CD8-positive, alpha-beta memory T cell (primary cell): ENCODE measurements at regions of chr12 and their contacts with region 1.

Region 1: DNA sequence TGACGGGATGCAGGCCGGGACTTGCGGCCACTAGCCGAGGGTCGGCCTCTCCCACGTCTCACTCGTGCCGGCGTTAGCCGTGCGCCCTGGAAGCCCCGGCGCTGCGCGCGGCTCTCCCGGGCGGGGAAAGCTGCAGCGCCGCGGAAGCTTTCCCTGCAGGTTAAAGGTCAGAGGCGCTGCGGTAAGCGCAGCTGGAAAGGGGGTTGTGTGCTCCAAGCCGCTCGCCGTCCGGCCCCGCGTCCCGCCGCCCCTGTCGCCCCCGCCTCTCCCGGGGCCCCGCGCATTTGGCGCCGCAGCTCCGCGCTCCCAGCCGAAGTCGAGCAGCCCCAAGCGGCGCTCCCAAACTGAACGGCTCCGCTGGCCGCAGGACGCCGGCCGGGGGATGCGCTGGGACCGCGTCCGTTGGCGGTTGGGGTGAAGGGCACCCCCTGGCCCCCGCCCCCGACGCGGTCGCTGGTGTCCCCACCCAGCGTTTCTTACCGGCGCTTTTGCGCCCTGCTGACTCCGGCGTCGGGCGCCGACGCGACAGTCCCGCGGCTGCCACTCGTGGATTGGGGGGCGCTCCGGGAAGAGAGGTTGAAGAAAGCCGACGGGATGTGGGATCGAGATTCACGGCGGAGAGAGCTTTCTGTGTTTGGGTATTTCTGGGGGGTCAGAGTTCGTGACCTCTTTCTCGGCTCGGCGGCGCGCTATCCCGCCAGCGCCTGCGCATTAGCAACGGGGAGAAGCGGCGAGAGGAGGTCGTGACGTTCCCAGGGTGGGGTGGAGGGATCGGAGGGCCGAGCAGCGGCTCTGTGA is at the start of gene NR2C1:
- DNase-seq: peak; percentile 85 to 95 (median 92)
- H3K4me3 ChIP-seq: peak within 1 kb of the TSS; percentile 88
- H3K4me3 Mint-ChIP-seq: peak within 1 kb of the TSS; percentile 95 to 98 (median 96)
- H3K27ac ChIP-seq: peak within 1 kb of the TSS; percentile 81
- H3K27ac Mint-ChIP-seq: peak within 1 kb of the TSS; percentile 80 to 99 (median 94)
- H3K4me1 ChIP-seq: peaks cover 12% of the 10 kb centered on the region
- H3K4me1 Mint-ChIP-seq: peaks cover 23 to 37% (median 25%) of the 10 kb centered on the region in 3 donors
- H3K27me3 ChIP-seq: no peaks in the 10 kb centered on the region
- H3K27me3 Mint-ChIP-seq: no peaks in the 10 kb centered on the region
- total RNA-seq, gene NR2C1: 17.1 to 21.9 TPM

Region 2: GRCh38 chr12:95217377-95218149 is 144.5 kb after region 1 on chr12 and contains the starts of genes FGD6 and VEZT:
- CTCF ChIA-PET with region 1: interaction called, 10 read pairs
- POLR2A ChIA-PET with region 1: interaction called, 10 read pairs
- DNase-seq: peak; percentile 94 to 98 (median 98)
- H3K4me3 ChIP-seq: peak within 1 kb of the TSS; percentile 84
- H3K4me3 Mint-ChIP-seq: peak within 1 kb of the TSS; percentile 91 to 98 (median 96)
- H3K27ac ChIP-seq: peak within 1 kb of the TSS; percentile 94
- H3K27ac Mint-ChIP-seq: peak within 1 kb of the TSS; percentile 86 to 99 (median 96)
- H3K4me1 ChIP-seq: peaks cover 17% of the 10 kb centered on the region
- H3K4me1 Mint-ChIP-seq: peaks cover 33 to 45% (median 42%) of the 10 kb centered on the region in 3 donors
- H3K27me3 ChIP-seq: no peaks in the 10 kb centered on the region
- H3K27me3 Mint-ChIP-seq: peaks cover 4 to 9% of the 10 kb centered on the region in 2 donors
- total RNA-seq, gene FGD6: 0.75 to 0.92 TPM
- total RNA-seq, gene VEZT: 46.8 to 53.6 TPM